ENCODE measurements at regions of chr11 and their contacts with region 1.

Region 1: GRCh38 chr11:107741044-107741823 is 29.4 kb upstream of the SLN start:
- DNase-seq: no peak
- H3K4me3 Mint-ChIP-seq: no peak overlapping the region
- H3K27ac Mint-ChIP-seq: no peak overlapping the region
- H3K4me1 Mint-ChIP-seq: no peaks in the 10 kb centered on the region
- H3K27me3 Mint-ChIP-seq: peaks cover 5% of the 10 kb centered on the region

Region 2: GRCh38 chr11:106785913-106786650 is 955.2 kb before region 1 on chr11:
- intact Hi-C with region 1: no loop called
- DNase-seq: no peak
- H3K4me3 Mint-ChIP-seq: no peak overlapping the region
- H3K27ac Mint-ChIP-seq: no peak overlapping the region
- H3K4me1 Mint-ChIP-seq: no peaks in the 10 kb centered on the region
- H3K27me3 Mint-ChIP-seq: no peaks in the 10 kb centered on the region

Region 3: GRCh38 chr11:107413352-107413751 is 327.9 kb before region 1 on chr11:
- intact Hi-C with region 1: no loop called
- DNase-seq: no peak
- H3K4me3 Mint-ChIP-seq: no peak overlapping the region
- H3K27ac Mint-ChIP-seq: no peak overlapping the region
- H3K4me1 Mint-ChIP-seq: peaks cover 13% of the 10 kb centered on the region
- H3K27me3 Mint-ChIP-seq: no peaks in the 10 kb centered on the region

Region 4: DNA sequence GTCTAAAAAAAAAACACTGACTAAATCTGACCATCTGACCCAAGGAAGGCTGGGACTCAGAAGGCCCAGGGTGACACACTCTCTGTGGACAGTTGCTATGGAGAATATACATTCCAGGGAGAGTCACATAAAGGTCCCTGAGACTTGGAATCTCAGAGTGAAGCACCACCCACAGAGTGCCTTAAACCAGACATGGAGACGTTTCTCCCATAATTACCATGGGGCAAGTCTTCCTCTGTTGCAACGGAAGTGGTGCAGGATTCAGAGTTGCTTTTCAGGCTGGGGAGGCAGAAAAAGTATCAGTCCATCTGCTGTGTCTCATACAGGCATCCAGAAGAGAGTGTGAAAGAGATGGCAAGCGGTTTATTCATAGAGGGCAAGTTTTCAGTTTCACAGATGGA is 29.3 kb after region 1 on chr11:
- intact Hi-C with region 1: loop called (anchors 2 kb)
- DNase-seq: no peak
- H3K4me3 Mint-ChIP-seq: no peak overlapping the region
- H3K27ac Mint-ChIP-seq: no peak overlapping the region
- H3K4me1 Mint-ChIP-seq: peaks cover 4% of the 10 kb centered on the region
- H3K27me3 Mint-ChIP-seq: peaks cover 7% of the 10 kb centered on the region

Region 5: GRCh38 chr11:107799218-107799859 is 58.1 kb after region 1 on chr11:
- intact Hi-C with region 1: loop called (anchors 1 kb)
- DNase-seq: peak; percentile 44
- H3K4me3 Mint-ChIP-seq: no peak overlapping the region
- H3K27ac Mint-ChIP-seq: no peak overlapping the region
- H3K4me1 Mint-ChIP-seq: no peaks in the 10 kb centered on the region
- H3K27me3 Mint-ChIP-seq: no peaks in the 10 kb centered on the region

Region 6: DNA sequence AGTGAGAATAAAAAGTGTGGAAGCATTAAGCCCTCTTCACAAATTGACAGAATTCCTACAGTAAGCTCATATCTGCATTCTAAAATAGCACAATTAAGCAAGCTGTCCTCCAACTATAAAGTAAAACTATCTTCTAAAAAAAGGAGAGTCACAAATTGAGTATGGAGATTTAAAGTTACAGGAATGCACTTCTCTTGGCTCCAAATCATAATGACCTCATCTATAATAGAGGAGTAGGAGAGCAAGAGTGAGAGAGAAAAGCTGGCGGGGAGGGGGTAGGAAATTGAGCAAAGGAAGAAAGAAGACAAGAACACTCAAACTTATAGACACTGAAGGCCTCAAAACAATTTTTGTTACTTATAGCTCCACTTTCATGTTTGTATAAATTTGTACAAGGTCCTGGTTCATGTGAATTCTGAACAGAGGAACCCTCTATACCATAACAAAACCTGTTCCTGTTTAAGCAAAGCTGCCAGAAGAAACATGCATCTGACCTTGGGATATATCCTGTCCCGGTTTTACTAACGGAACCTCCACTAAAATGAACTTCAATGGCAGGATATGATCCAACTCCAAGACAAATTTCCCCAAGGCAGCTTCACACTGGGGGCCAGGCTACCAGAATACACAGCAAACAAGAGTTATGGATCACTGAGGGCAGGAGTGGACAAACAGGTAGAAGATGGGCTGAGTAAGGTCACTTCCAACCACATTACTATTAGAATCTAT is 80.1 kb after region 1 on chr11:
- intact Hi-C with region 1: no loop called
- DNase-seq: no peak
- H3K4me3 Mint-ChIP-seq: no peak overlapping the region
- H3K27ac Mint-ChIP-seq: no peak overlapping the region
- H3K4me1 Mint-ChIP-seq: peaks cover 10% of the 10 kb centered on the region
- H3K27me3 Mint-ChIP-seq: no peaks in the 10 kb centered on the region

Region 7: GRCh38 chr11:107898270-107898669 is 157.0 kb after region 1 on chr11:
- intact Hi-C with region 1: loop called (anchors 1 kb)
- DNase-seq: no peak
- H3K4me3 Mint-ChIP-seq: no peak overlapping the region
- H3K27ac Mint-ChIP-seq: no peak overlapping the region
- H3K4me1 Mint-ChIP-seq: no peaks in the 10 kb centered on the region
- H3K27me3 Mint-ChIP-seq: peaks cover 4% of the 10 kb centered on the region

Measured in activated T-helper 1 cell treated with anti-CD3 and anti-CD28 coated beads, Interleukin-12 subunit alpha, Interleukin-12 subunit beta, Interleukin-2, Interleukin-4 antibody, amounts not matched to agents 30 ng/mL and 10 ng/mL and 1 ng/mL, durations not matched to agents 14 hours and 24 hours and 36 hours (primary cell).